Calu3 (cell line): ENCODE measurements at regions of chr2 and their contacts with region 1.

Region 1: DNA sequence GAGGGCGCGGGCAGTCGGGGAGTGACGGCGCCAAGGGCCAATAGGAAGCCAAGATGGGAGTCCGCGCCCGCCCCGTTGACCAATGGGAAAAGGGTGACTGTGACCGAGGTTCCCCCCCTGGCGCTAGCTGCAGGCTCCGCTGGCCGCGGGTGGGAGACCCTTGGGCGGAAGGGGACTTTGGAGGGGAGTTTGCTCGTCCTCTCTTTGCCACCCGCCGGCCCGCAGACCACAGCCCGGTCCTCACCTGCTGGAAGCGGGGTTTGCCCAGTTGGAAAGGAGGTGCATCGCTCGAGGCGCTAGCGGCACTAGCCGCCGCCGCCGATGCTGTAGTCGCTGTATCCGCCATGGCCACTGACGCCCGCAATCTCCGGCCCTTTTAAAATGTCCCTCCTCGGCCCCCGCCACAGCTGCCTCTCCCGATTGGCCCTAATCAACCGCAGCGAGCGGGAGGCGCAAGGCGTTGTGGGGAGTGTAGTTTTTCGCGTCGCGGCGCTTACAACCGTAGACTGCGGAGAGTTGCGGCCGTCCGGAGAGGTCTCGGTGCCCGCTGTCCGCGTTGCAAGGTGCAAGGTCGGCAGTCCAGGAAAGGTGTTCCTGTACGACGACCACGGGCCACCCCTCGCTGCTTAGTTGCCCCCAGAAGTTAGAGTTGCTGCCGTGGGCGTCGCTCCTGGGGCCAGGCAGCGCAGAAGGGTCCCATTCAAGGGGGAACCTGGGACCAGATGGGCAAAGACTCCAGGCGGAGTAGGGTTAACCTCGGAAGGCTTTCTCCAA is at the start of gene SFXN5:
- DNase-seq: peak; percentile 98
- H3K4me3 Mint-ChIP-seq: peak within 1 kb of the TSS; percentile 86
- H3K27ac Mint-ChIP-seq: peak within 1 kb of the TSS; percentile 92
- H3K4me1 Mint-ChIP-seq: peaks cover 25% of the 10 kb centered on the region
- H3K27me3 Mint-ChIP-seq: no peaks in the 10 kb centered on the region
- CTCF ChIP-seq: no peak
- total RNA-seq, gene SFXN5: 11.3 and 16.4 TPM in 2 replicates

Region 2: DNA sequence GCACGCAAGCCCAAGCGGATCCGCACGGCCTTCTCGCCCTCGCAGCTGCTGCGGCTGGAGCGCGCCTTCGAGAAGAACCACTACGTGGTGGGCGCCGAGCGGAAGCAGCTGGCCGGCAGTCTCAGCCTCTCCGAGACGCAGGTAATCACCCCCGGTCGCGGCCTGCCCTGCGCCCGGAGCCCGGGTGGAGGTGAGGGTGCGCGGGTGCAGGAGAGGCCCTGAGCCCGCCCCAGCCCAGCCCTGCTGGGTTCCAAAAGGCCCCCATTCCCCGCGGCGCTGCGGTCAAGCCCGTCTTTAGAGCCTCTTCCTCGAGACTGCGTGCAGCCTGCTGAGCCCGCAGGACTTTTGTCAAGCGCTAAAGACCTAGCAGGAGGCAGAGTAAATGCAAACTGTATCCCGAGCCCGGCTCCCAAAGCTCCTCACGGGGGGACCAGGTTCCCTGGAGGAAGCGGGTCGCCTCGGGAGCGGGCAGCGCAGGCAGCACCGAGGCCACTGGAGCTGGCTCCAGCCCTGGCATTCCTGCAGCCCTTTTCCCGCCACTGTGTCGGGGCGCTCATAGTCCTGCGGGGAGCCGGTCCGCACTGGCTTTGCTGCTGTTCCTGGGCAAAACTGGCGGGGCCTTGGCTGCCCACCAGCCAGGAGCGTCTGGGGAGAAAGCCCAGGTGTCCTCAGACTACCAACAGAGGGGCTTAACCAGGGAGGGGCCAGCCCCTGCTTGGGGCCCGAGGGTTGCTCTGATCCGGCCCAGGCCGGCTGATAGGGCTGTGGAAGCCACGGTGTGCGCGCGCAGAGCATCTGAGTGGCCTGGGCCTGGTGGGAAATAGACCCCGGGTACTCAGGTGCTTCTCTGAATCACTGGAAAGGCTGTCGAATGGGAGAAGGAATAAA is 146.9 kb before region 1 on chr2:
- CTCF ChIA-PET with region 1: no interaction called
- intact Hi-C with region 1: no loop called
- DNase-seq: no peak
- H3K4me3 Mint-ChIP-seq: peak overlapping the region; percentile 45
- H3K27ac Mint-ChIP-seq: no peak overlapping the region
- H3K4me1 Mint-ChIP-seq: no peaks in the 10 kb centered on the region
- H3K27me3 Mint-ChIP-seq: peaks cover 39% of the 10 kb centered on the region
- CTCF ChIP-seq: no peak

Region 3: DNA sequence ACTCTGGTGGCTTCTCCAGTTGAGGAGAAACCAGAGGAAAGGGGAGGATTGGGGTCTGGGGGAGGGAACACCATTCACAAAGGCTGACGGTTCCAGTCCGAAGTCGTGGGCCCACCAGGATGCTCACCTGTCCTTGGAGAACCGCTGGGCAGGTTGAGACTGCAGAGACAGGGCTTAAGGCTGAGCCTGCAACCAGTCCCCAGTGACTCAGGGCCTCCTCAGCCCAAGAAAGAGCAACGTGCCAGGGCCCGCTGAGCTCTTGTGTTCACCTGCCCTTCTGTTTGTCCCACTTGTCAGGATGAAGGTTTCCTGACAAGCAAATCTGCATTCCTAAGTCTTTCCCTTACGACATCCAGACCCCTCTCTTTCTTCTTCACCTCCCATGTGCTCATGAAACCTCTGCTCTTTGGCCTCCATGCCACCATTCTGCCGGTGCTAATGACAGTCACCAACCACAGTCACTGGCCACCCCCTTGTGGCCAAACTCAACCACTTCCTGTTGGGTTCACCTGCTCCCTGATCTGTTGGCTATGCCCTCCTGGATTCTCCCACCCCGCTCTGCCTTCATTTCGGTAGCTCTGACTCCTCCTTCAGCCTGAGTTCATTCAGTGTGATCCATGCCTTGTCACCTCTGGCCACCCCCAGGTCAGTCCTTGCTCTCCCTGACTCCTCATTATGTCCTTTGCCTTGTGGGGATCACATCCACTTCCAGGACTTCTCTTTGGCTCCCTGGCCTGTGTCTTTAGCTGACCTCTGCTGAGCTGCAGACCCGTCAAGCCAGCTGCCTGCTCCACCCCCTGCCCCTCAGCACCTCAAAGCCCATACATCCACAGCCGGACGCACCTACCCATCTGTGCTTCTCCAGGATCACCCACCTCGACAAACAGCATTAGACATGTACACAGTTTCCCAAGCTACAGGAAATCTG is 136.6 kb before region 1 on chr2:
- CTCF ChIA-PET with region 1: no interaction called
- intact Hi-C with region 1: no loop called
- DNase-seq: peak; percentile 64
- H3K4me3 Mint-ChIP-seq: no peak overlapping the region
- H3K27ac Mint-ChIP-seq: no peak overlapping the region
- H3K4me1 Mint-ChIP-seq: no peaks in the 10 kb centered on the region
- H3K27me3 Mint-ChIP-seq: peaks cover 39% of the 10 kb centered on the region
- CTCF ChIP-seq: peak; percentile 58

Region 4: GRCh38 chr2:73085691-73086360 is 14.3 kb after region 1 on chr2:
- CTCF ChIA-PET with region 1: no interaction called
- intact Hi-C with region 1: no loop called
- DNase-seq: peak; percentile 88
- H3K4me3 Mint-ChIP-seq: no peak overlapping the region
- H3K27ac Mint-ChIP-seq: no peak overlapping the region
- H3K4me1 Mint-ChIP-seq: peaks cover 35% of the 10 kb centered on the region
- H3K27me3 Mint-ChIP-seq: no peaks in the 10 kb centered on the region
- CTCF ChIP-seq: peak; percentile 75

Region 5: GRCh38 chr2:73163483-73164367 is 92.2 kb after region 1 on chr2:
- CTCF ChIA-PET with region 1: no interaction called
- intact Hi-C with region 1: loop called (anchors 5 kb)
- DNase-seq: peak; percentile 80
- H3K4me3 Mint-ChIP-seq: no peak overlapping the region
- H3K27ac Mint-ChIP-seq: no peak overlapping the region
- H3K4me1 Mint-ChIP-seq: no peaks in the 10 kb centered on the region
- H3K27me3 Mint-ChIP-seq: peaks cover 44% of the 10 kb centered on the region
- CTCF ChIP-seq: peak; percentile 90